CD4-positive, alpha-beta memory T cell (primary cell): ENCODE measurements at regions of chr19 and their contacts with region 1.

Region 1: DNA sequence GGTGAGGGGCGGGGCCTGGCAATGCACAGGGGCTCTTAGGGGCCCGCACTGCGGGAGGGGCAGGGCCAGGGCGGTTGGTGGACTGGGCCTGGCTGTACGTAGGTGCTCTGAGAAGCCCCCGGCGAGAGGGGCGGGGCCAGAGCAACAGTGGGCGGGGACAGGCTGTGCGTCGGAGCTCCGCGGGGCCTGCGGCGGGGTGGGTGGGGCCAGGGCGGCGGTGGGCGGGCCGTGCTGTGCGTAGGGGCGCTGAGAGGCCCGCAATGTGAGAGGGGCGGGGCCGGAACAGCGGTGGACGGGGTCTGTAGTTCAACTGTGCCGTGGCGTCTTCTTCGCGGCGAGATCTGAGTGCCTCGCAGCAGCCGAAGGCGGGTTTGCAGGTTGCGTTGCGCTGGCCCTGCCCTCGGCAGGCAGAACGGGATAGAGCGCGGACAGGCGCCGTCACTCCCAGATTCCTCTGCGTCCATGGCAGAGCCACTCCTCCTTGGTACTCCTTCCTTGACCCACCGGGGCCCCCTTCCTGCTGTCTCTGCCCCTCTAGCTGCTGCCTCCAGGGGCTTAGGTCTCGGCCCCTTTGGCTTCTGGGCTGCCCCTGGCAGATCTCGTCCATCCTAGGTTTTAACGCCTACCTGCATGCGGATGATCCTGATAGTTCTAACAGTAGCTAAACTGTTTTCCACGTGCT is 33.2 kb downstream of the CCNE1 start:
- DNase-seq: peak in 4 of 5 donors; percentile 94 to 96 (median 96)
- H3K4me3 ChIP-seq: peak overlapping the region; percentile 67 to 71
- H3K4me3 Mint-ChIP-seq: peak overlapping the region; percentile 88 to 98 (median 94)
- H3K27ac ChIP-seq: peak overlapping the region; percentile 63
- H3K27ac Mint-ChIP-seq: peak overlapping the region; percentile 81 to 98 (median 95)
- H3K4me1 ChIP-seq: peaks cover 21% of the 10 kb centered on the region
- H3K4me1 Mint-ChIP-seq: peaks cover 7 to 24% (median 12%) of the 10 kb centered on the region in 4 donors
- H3K27me3 ChIP-seq: no peaks in the 10 kb centered on the region
- H3K27me3 Mint-ChIP-seq: peaks cover 0 to 1% of the 10 kb centered on the region in 2 donors

Region 2: GRCh38 chr19:29665215-29665825 is 179.7 kb before region 1 on chr19 and contains the start of gene PLEKHF1:
- CTCF ChIA-PET with region 1: interaction called, 3 read pairs
- POLR2A ChIA-PET with region 1: interaction called, 6 read pairs
- intact Hi-C with region 1: loop called (anchors 2 kb)
- DNase-seq: peak; percentile 73 to 88 (median 78)
- H3K4me3 ChIP-seq: peak within 1 kb of the TSS; percentile 77 to 83
- H3K4me3 Mint-ChIP-seq: peak within 1 kb of the TSS; percentile 89 to 98 (median 93)
- H3K27ac ChIP-seq: peak within 1 kb of the TSS; percentile 92
- H3K27ac Mint-ChIP-seq: peak within 1 kb of the TSS; percentile 92 to 100 (median 96)
- H3K4me1 ChIP-seq: peaks cover 42% of the 10 kb centered on the region
- H3K4me1 Mint-ChIP-seq: peaks cover 24 to 62% (median 38%) of the 10 kb centered on the region in 4 donors
- H3K27me3 ChIP-seq: no peaks in the 10 kb centered on the region
- H3K27me3 Mint-ChIP-seq: no peaks in the 10 kb centered on the region
- total RNA-seq, gene PLEKHF1: 31.2 to 32.4 TPM

Region 3: GRCh38 chr19:29714953-29715700 is 129.9 kb before region 1 on chr19 and contains the start of gene C19orf12:
- CTCF ChIA-PET with region 1: interaction called, 3 read pairs
- POLR2A ChIA-PET with region 1: interaction called, 33 read pairs
- intact Hi-C with region 1: loop called (anchors 1 kb)
- DNase-seq: peak in 4 of 5 donors; percentile 53 to 86 (median 80)
- H3K4me3 ChIP-seq: peak within 1 kb of the TSS; percentile 80 to 84
- H3K4me3 Mint-ChIP-seq: peak within 1 kb of the TSS; percentile 88 to 95 (median 92)
- H3K27ac ChIP-seq: peak within 1 kb of the TSS; percentile 88
- H3K27ac Mint-ChIP-seq: peak within 1 kb of the TSS; percentile 95 to 98 (median 98)
- H3K4me1 ChIP-seq: peaks cover 56% of the 10 kb centered on the region
- H3K4me1 Mint-ChIP-seq: peaks cover 41 to 60% (median 52%) of the 10 kb centered on the region in 4 donors
- H3K27me3 ChIP-seq: no peaks in the 10 kb centered on the region
- H3K27me3 Mint-ChIP-seq: no peaks in the 10 kb centered on the region
- total RNA-seq, gene C19orf12: 29.3 to 30.1 TPM

Region 4: GRCh38 chr19:29811125-29812079 is 33.6 kb before region 1 on chr19 and contains the start of gene CCNE1:
- CTCF ChIA-PET with region 1: interaction called, 5 read pairs
- POLR2A ChIA-PET with region 1: interaction called, 52 read pairs
- intact Hi-C with region 1: loop called (anchors 1 kb)
- DNase-seq: peak; percentile 90 to 93 (median 92)
- H3K4me3 ChIP-seq: peak within 1 kb of the TSS in 1 of 2 donors; percentile 35
- H3K4me3 Mint-ChIP-seq: peak within 1 kb of the TSS; percentile 81 to 97 (median 86)
- H3K27ac ChIP-seq: peak within 1 kb of the TSS; percentile 52
- H3K27ac Mint-ChIP-seq: peak within 1 kb of the TSS; percentile 75 to 92 (median 88)
- H3K4me1 ChIP-seq: peaks cover 10% of the 10 kb centered on the region
- H3K4me1 Mint-ChIP-seq: peaks cover 6 to 17% (median 14%) of the 10 kb centered on the region in 4 donors
- H3K27me3 ChIP-seq: no peaks in the 10 kb centered on the region
- H3K27me3 Mint-ChIP-seq: no peaks in the 10 kb centered on the region
- total RNA-seq, gene CCNE1: 2.9 to 3.4 TPM

Region 5: DNA sequence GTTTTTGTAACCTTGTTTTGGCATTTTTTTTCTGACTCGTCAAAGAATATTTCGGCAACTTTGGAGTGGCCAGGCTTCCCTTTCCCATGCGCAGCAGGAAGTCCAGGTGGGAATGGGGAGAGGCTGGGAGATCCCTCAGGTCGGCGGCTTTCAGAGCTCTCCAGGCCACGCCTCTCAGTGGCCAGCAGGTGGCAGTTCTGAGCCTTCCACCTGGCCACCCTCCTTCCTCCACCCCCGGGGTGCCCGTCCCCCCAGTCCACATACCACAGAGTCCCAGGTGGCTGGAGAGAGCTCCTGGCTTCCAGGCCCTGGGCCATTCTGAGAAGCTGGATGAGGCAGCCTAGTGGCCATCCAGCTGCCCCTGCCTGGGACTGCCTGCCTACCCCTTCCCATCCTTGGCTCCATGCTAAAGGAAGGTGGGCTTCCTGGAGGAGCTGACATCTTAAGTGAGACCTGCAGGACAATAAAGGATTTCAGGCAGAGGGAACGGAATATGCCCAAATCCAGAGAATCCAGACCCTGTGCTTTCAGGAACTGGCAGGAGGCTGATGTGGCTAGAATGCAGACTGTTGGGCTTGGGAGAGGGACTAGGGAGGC is 13.1 kb after region 1 on chr19:
- CTCF ChIA-PET with region 1: interaction called, 25 read pairs
- POLR2A ChIA-PET with region 1: interaction called, 8 read pairs
- intact Hi-C with region 1: no loop called
- DNase-seq: peak in 4 of 5 donors; percentile 25 to 42 (median 32)
- H3K4me3 ChIP-seq: no peak overlapping the region
- H3K4me3 Mint-ChIP-seq: no peak overlapping the region
- H3K27ac ChIP-seq: no peak overlapping the region
- H3K27ac Mint-ChIP-seq: no peak overlapping the region
- H3K4me1 ChIP-seq: no peaks in the 10 kb centered on the region
- H3K4me1 Mint-ChIP-seq: no peaks in the 10 kb centered on the region
- H3K27me3 ChIP-seq: no peaks in the 10 kb centered on the region
- H3K27me3 Mint-ChIP-seq: peaks cover 11 to 14% of the 10 kb centered on the region in 2 donors

Region 6: DNA sequence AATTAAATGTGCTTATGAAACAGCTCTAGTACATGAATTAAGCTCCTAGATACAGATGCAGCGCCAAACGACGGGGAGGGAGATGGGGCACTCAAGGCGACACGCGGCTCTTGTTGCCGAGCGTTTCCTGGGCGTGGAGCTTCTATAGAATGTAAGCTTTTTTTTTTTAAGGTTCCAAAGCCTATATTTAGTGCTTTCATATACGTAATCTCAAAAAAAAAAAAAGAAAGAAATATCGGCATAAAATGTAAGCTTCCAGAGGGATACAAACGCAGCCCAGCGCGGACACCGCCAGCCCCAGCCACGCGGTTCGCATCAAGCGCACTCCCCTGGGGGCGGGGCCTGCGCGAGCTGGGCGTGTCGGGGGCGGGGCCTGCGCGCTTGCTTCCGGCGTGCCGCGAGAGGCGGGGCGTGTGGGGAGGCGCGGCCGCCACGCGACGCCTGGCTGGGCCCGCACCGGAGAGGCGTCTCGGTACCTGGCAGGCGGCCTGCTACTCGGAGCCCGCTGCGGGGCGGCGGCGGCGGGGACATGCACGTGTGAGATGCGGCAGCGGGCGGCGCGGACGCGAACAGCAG is 96.9 kb after region 1 on chr19 and contains the start of gene URI1:
- CTCF ChIA-PET with region 1: interaction called, 3 read pairs
- POLR2A ChIA-PET with region 1: interaction called, 20 read pairs
- intact Hi-C with region 1: loop called (anchors 1 kb)
- DNase-seq: peak; percentile 88 to 95 (median 91)
- H3K4me3 ChIP-seq: peak within 1 kb of the TSS; percentile 88 to 93
- H3K4me3 Mint-ChIP-seq: peak within 1 kb of the TSS; percentile 95 to 99 (median 96)
- H3K27ac ChIP-seq: peak within 1 kb of the TSS; percentile 78
- H3K27ac Mint-ChIP-seq: peak within 1 kb of the TSS; percentile 78 to 98 (median 95)
- H3K4me1 ChIP-seq: peaks cover 50% of the 10 kb centered on the region
- H3K4me1 Mint-ChIP-seq: peaks cover 28 to 48% (median 39%) of the 10 kb centered on the region in 4 donors
- H3K27me3 ChIP-seq: no peaks in the 10 kb centered on the region
- H3K27me3 Mint-ChIP-seq: peaks cover 0 to 6% of the 10 kb centered on the region in 2 donors
- total RNA-seq, gene URI1: 91.7 to 95.0 TPM